ENCODE measurements at regions of chr1 and their contacts with region 1.

Region 1: GRCh38 chr1:27476237-27476636 is 13.7 kb downstream of the WASF2 start:
- DNase-seq: no peak
- ATAC-seq: peak in 5 of 8 donors; percentile 8 to 38 (median 26)
- H3K4me3 ChIP-seq: no peak overlapping the region
- H3K27ac ChIP-seq: peak overlapping the region in 2 of 10 donors; percentile 10 to 28
- H3K4me1 ChIP-seq: peaks cover 7 to 88% (median 71%) of the 10 kb centered on the region in 9 donors
- H3K27me3 ChIP-seq: no peaks in the 10 kb centered on the region
- CTCF ChIP-seq: no peak

Region 2: GRCh38 chr1:27021354-27022031 is 454.7 kb before region 1 on chr1:
- intact Hi-C with region 1: no loop called
- DNase-seq: no peak
- ATAC-seq: peak in 1 of 8 donors; percentile 22
- H3K4me3 ChIP-seq: no peak overlapping the region
- H3K27ac ChIP-seq: no peak overlapping the region
- H3K4me1 ChIP-seq: peaks cover 0 to 9% (median 0%) of the 10 kb centered on the region in 9 donors
- H3K27me3 ChIP-seq: no peaks in the 10 kb centered on the region
- CTCF ChIP-seq: no peak

Region 3: DNA sequence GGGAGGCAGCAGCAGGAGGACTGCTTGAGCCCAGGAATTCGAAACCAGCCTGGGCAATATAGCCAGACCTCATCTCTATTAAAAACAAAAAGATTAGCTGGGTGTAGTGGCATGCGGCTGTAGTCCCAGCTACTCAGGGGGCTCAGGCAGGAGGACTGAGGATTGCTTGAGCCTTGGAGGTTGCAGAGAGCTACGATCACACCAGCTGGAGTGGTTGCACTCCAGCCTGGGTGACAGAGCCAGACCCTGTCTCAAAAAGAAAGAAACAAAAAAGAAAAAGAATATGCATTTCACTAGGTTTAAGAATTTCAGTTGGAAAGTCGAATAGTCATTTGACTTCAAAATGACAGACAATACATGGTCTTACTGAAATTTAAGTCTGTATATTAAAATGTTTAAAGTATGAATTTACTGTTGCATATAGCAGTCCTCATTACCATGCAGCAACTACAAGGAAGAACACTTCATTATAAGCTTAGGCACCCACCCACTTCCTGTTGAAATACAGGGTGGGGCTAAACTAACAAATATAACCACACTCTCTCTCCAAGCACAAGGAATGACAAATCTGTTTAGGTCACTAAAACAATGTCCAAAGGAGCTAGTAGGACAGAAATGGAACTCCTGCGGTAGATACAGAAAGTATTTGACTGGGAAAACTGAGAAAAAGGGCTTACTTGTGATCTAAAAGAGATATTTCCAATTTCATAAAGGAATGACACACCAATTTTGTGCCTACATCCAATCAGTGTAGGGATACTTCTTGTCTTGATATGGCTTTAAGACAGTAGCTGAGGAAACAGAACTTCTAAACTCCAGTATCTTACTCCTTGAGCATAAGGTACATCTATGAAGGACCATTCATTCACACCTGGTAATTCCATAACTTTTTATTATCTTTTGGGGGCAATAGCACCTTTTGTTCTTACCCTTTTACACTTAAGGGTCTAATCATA is 39.8 kb before region 1 on chr1:
- intact Hi-C with region 1: loop called in 2 of 10 experiments (anchors 5 kb)
- DNase-seq: peak in 1 of 2 donors; percentile 53
- ATAC-seq: peak; percentile 66 to 90 (median 84)
- H3K4me3 ChIP-seq: peak overlapping the region in 5 of 10 donors; percentile 1 to 27 (median 13)
- H3K27ac ChIP-seq: peak overlapping the region; percentile 49 to 86 (median 75)
- H3K4me1 ChIP-seq: peaks cover 31 to 88% (median 81%) of the 10 kb centered on the region in 9 donors
- H3K27me3 ChIP-seq: no peaks in the 10 kb centered on the region
- CTCF ChIP-seq: no peak

Region 4: DNA sequence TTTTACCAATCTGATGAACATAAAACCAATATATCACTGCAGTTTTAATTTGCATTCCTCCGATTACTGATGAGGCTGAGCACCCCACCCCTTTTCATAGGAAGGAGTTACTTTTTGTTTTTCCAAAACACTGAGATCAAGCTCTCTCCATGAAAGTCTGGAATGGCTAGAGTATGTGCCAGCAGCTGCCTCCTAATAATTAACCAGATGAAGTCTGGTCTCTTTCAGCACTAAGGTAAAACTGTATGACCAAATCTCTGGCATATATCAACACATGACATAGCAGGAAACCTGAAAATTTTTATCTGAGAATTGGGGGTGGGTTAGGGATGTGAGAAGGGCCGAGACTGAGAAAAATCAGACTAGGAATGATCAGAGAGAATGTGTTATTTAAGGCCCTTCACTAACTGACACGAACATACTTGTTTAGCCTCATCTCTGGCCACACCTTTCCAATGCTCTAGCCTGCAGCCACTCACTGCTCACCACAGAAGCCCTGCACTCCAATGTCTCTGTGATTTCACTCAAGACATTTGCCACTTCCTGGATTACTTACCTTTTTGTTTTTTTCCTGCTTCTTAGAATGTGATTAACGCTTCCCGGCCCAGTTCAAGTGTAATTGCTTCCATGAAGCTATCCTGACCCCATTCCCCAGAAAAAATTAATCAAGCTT is 21.0 kb before region 1 on chr1:
- intact Hi-C with region 1: no loop called
- DNase-seq: no peak
- ATAC-seq: peak in 1 of 8 donors; percentile 38
- H3K4me3 ChIP-seq: no peak overlapping the region
- H3K27ac ChIP-seq: peak overlapping the region in 3 of 10 donors; percentile 6 to 57 (median 16)
- H3K4me1 ChIP-seq: peaks cover 0 to 80% (median 51%) of the 10 kb centered on the region in 9 donors
- H3K27me3 ChIP-seq: no peaks in the 10 kb centered on the region
- CTCF ChIP-seq: no peak